ENCODE measurements at regions of chr16 and their contacts with region 1.

Region 1: GRCh38 chr16:30698139-30698815 is 694 bp upstream of the SRCAP start:
- DNase-seq: peak; percentile 100
- H3K4me3 Mint-ChIP-seq: peak overlapping the region; percentile 93
- H3K27ac Mint-ChIP-seq: peak overlapping the region; percentile 99
- H3K4me1 Mint-ChIP-seq: peaks cover 48% of the 10 kb centered on the region
- H3K27me3 Mint-ChIP-seq: no peaks in the 10 kb centered on the region

Region 2: DNA sequence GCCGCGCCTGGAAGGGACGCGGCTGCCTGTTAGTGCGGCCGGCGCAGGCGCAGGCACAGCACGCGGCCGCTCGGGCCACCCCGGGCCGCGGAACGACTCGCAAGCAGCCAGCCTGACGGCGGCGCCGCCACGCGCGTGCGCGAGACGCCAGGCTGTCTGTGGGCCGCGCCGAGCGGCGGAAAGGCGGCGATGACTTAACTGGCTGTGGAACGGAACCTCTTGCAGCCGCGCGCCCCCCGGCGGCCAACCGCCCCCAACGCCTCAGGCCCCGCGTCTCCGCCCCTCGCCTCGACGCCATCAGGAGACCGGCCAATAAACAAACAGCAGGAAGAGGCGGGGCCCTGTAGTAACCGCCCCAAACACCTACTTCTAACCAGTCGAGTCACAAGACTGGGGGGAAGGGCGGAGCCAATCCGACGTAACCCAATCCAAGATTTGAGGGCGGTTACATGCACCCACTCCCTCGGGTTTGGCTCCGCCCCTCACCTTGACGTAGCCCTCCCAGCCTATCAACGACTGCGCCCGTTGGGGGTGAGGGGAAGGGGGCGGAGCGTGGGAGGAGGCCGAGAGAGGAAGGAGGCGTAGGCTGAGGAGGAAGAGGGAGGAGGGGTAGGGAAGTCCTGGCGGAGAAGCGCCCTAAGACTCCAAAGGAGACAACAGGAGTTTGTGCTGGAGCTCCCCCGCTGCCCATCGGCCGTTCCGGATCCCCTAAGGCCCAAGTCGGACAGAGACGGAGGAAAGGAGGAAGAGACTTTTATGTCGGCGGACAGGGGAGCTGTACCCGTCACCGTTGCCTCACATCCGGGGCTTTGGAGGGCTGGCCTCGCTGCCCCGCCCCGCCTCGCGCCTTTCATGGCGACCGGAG is 40.2 kb before region 1 on chr16 and contains the start of gene FBRS:
- CTCF ChIA-PET with region 1: interaction called, 32 read pairs
- POLR2A ChIA-PET with region 1: interaction called, 4 read pairs
- DNase-seq: peak; percentile 100
- H3K4me3 Mint-ChIP-seq: peak within 1 kb of the TSS; percentile 93
- H3K27ac Mint-ChIP-seq: peak within 1 kb of the TSS; percentile 100
- H3K4me1 Mint-ChIP-seq: peaks cover 49% of the 10 kb centered on the region
- H3K27me3 Mint-ChIP-seq: no peaks in the 10 kb centered on the region
- total RNA-seq, gene FBRS: 88.9 to 109 TPM